Adrenal gland (tissue), 19 donors: ENCODE measurements at regions of chr1 and their contacts with region 1.

Region 1: DNA sequence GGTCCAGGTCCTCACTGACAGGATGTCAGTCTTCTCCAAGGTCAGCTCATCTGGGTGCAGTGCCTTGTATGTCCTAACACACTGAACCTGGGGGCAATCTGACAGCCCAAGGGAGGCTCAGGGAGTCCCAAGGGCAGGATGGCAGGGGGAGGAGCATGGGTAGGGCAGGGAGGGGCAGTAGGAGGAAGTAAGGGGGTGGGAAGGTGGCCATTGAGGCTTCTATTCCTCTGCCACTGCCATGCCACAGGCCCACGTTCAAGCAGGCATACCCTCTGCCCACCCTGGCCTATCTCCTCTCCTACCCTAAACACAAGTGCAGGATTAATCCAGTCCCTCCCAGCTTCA is 13.3 kb downstream of the ARHGEF19 start:
- DNase-seq: no peak
- H3K4me3 ChIP-seq: no peak overlapping the region
- H3K27ac ChIP-seq: no peak overlapping the region
- H3K4me1 ChIP-seq: peaks cover 0 to 6% of the 10 kb centered on the region in 2 donors
- H3K27me3 ChIP-seq: no peaks in the 10 kb centered on the region
- CTCF ChIP-seq: no peak
- POLR2A ChIP-seq: no peak

Region 2: GRCh38 chr1:16243936-16244649 is 45.0 kb after region 1 on chr1:
- intact Hi-C with region 1: loop called in 1 of 2 experiments (anchors 5 kb)
- DNase-seq: peak; percentile 76 to 95 (median 88)
- H3K4me3 ChIP-seq: no peak overlapping the region
- H3K27ac ChIP-seq: peak overlapping the region in 2 of 5 donors; percentile 42 to 48
- H3K4me1 ChIP-seq: peaks cover 13 to 23% of the 10 kb centered on the region in 2 donors
- H3K27me3 ChIP-seq: no peaks in the 10 kb centered on the region
- CTCF ChIP-seq: peak; percentile 74 to 89 (median 86)
- POLR2A ChIP-seq: no peak